CD14-positive monocyte (primary cell): ENCODE measurements at regions of chr11 and their contacts with region 1.

Region 1: GRCh38 chr11:59224351-59224928 is 11.7 kb upstream of the MPEG1 start:
- DNase-seq: peak; percentile 88 to 92 (median 92)
- H3K4me3 ChIP-seq: peak overlapping the region in 2 of 3 experiments; percentile 45 to 61
- H3K4me3 Mint-ChIP-seq: peak overlapping the region; percentile 74 to 76
- H3K27ac ChIP-seq: peak overlapping the region; percentile 93 to 98
- H3K27ac Mint-ChIP-seq: peak overlapping the region; percentile 96 to 99 (median 98)
- H3K4me1 ChIP-seq: peaks cover 69 to 73% of the 10 kb centered on the region in 2 donors
- H3K4me1 Mint-ChIP-seq: peaks cover 78% of the 10 kb centered on the region
- H3K27me3 ChIP-seq: no peaks in the 10 kb centered on the region
- H3K27me3 Mint-ChIP-seq: peaks cover 0 to 1% (median 0%) of the 10 kb centered on the region in 3 donors
- CTCF ChIP-seq: no peak

Region 2: DNA sequence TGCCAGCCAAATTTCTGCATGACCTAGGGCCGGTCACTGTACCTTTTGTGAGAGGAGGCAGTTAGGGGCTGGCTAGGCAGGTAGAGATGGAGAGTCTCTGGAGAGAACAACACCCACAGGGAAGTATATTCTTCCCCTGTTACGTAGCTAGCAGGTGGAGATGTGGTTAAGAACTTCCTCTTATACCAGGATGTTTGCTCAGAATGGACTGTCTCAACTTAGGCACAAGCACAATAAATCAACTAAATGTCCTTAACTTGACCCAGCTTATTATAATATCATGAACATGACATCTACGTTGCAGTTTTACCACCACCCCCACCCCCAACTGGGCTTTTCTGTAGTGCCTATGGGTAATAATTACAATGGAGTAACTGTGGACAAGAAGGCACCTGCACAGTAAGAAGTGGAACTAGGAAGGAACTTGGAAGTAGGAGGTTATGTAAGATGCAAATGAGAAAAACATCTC is 49.0 kb after region 1 on chr11:
- intact Hi-C with region 1: loop called in 1 of 2 experiments (anchors 5 kb)
- DNase-seq: peak; percentile 85 to 90 (median 88)
- H3K4me3 ChIP-seq: peak overlapping the region in 1 of 3 experiments; percentile 18
- H3K4me3 Mint-ChIP-seq: peak overlapping the region; percentile 34 to 60
- H3K27ac ChIP-seq: peak overlapping the region; percentile 62 to 72
- H3K27ac Mint-ChIP-seq: peak overlapping the region; percentile 94 to 98 (median 95)
- H3K4me1 ChIP-seq: peaks cover 63 to 78% of the 10 kb centered on the region in 2 donors
- H3K4me1 Mint-ChIP-seq: peaks cover 77% of the 10 kb centered on the region
- H3K27me3 ChIP-seq: no peaks in the 10 kb centered on the region
- H3K27me3 Mint-ChIP-seq: peaks cover 0 to 3% (median 0%) of the 10 kb centered on the region in 3 donors
- CTCF ChIP-seq: no peak